Heart right ventricle (tissue), 16 donors: ENCODE measurements at regions of chr17 and their contacts with region 1.

Region 1: DNA sequence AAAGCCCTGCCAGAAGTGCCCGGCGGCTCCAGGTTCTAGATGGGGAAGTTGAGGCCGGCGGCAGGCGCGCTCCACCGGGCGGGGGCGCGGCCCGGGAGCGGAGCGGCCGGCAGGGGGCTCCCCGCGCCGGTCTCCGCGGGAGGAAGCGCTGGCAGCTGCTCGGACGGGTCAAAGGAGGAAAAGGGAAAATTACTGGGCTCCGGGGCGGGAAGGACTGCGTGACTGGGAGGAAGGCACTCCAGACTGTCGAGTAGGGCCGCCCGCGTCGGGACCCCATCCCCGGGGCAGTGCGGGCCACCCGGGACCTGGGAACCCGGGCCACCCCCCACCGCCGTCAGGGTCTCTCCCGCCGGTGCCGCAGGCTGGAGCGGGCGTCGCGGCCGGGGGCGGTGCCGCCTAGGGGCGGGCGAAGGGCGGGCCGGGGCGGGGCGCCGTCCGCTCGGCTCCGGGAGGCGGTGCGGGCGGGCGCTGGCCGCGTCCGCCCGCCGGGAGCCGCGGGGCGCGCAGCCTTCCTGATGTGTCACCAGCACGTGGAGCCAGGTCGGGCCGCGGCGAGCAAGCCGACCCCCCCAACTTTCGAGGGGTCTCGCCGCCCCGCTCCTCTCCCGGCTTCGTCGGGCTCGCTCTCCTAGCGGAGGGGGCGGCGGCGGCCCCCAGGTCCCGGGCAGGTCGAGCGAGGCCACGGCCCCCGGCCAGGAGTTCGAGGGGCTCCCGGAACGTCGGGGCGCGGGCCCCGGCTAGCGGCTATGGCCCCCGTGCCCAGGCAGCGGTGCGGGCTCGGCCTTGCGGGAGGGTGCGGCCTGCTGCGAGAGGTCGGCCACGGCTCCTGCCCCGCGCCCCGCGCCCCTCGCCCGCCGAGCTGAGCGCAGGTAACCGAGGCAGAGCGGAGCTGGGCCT is 167.5 kb downstream of the RAB11FIP4 start:
- DNase-seq: peak; percentile 80 to 84
- ATAC-seq: peak; percentile 85 to 94 (median 90)
- H3K4me3 ChIP-seq: peak overlapping the region; percentile 58 to 89 (median 72)
- H3K27ac ChIP-seq: peak overlapping the region; percentile 57 to 97 (median 94)
- H3K4me1 ChIP-seq: peaks cover 11 to 47% (median 29%) of the 10 kb centered on the region in 9 donors
- H3K27me3 ChIP-seq: no peaks in the 10 kb centered on the region
- CTCF ChIP-seq: peak; percentile 80 to 99 (median 91)

Region 2: GRCh38 chr17:31425282-31426040 is 133.5 kb before region 1 on chr17:
- intact Hi-C with region 1: no loop called
- DNase-seq: peak; percentile 34 to 42
- ATAC-seq: peak; percentile 41 to 75 (median 50)
- H3K4me3 ChIP-seq: no peak overlapping the region
- H3K27ac ChIP-seq: peak overlapping the region in 6 of 10 donors; percentile 9 to 36 (median 21)
- H3K4me1 ChIP-seq: peaks cover 2 to 18% (median 10%) of the 10 kb centered on the region in 9 donors
- H3K27me3 ChIP-seq: peaks cover 0 to 26% (median 9%) of the 10 kb centered on the region in 7 donors
- CTCF ChIP-seq: no peak

Region 3: DNA sequence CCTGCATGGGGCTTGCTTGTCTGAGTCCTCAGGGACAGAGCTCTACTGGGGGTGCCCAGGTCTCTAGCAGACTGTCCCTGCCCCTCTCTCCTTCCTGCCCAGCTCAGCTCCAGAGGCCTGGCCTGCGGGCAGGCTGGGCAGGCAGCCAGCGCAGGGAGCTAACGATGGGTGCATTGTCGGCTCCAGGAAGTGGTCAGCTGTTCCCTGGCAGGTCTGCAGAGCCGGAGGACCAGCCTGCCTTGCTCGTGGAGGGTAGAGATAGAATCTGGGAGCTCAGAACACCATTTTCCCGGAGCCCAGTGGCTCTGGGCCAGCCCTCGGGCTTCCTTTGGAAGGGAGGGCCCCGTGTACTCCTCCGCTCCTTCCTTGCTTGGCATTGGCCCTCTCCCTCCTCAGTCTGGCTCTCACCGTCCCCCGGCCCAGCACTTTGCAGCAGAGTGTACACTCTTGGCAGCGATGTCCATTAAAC is 22.1 kb after region 1 on chr17:
- intact Hi-C with region 1: loop called in 1 of 10 experiments (anchors 2 kb)
- DNase-seq: peak; percentile 79 to 83
- ATAC-seq: peak; percentile 80 to 94 (median 88)
- H3K4me3 ChIP-seq: peak overlapping the region in 7 of 10 donors; percentile 22 to 41 (median 32)
- H3K27ac ChIP-seq: peak overlapping the region; percentile 53 to 95 (median 85)
- H3K4me1 ChIP-seq: peaks cover 6 to 54% (median 36%) of the 10 kb centered on the region in 9 donors
- H3K27me3 ChIP-seq: no peaks in the 10 kb centered on the region
- CTCF ChIP-seq: no peak

Region 4: GRCh38 chr17:31690151-31690551 is 131.2 kb after region 1 on chr17:
- intact Hi-C with region 1: loop called in 5 of 10 experiments (anchors 5 to 10 kb)
- DNase-seq: no peak
- ATAC-seq: no peak
- H3K4me3 ChIP-seq: no peak overlapping the region
- H3K27ac ChIP-seq: no peak overlapping the region
- H3K4me1 ChIP-seq: peaks cover 0 to 34% (median 28%) of the 10 kb centered on the region in 9 donors
- H3K27me3 ChIP-seq: no peaks in the 10 kb centered on the region
- CTCF ChIP-seq: no peak

Region 5: GRCh38 chr17:31722251-31723056 is 163.5 kb after region 1 on chr17:
- intact Hi-C with region 1: loop called in 2 of 10 experiments (anchors 10 kb)
- DNase-seq: peak; percentile 21 to 64
- ATAC-seq: peak; percentile 88 to 98 (median 95)
- H3K4me3 ChIP-seq: no peak overlapping the region
- H3K27ac ChIP-seq: peak overlapping the region in 9 of 10 donors; percentile 47 to 88 (median 82)
- H3K4me1 ChIP-seq: peaks cover 13 to 36% (median 27%) of the 10 kb centered on the region in 9 donors
- H3K27me3 ChIP-seq: no peaks in the 10 kb centered on the region
- CTCF ChIP-seq: no peak

Region 6: GRCh38 chr17:31740611-31741082 is 181.7 kb after region 1 on chr17:
- intact Hi-C with region 1: loop called in 1 of 10 experiments (anchors 2 kb)
- DNase-seq: no peak
- ATAC-seq: no peak
- H3K4me3 ChIP-seq: no peak overlapping the region
- H3K27ac ChIP-seq: peak overlapping the region in 8 of 10 donors; percentile 1 to 79 (median 60)
- H3K4me1 ChIP-seq: peaks cover 7 to 65% (median 48%) of the 10 kb centered on the region in 9 donors
- H3K27me3 ChIP-seq: no peaks in the 10 kb centered on the region
- CTCF ChIP-seq: no peak

Region 7: DNA sequence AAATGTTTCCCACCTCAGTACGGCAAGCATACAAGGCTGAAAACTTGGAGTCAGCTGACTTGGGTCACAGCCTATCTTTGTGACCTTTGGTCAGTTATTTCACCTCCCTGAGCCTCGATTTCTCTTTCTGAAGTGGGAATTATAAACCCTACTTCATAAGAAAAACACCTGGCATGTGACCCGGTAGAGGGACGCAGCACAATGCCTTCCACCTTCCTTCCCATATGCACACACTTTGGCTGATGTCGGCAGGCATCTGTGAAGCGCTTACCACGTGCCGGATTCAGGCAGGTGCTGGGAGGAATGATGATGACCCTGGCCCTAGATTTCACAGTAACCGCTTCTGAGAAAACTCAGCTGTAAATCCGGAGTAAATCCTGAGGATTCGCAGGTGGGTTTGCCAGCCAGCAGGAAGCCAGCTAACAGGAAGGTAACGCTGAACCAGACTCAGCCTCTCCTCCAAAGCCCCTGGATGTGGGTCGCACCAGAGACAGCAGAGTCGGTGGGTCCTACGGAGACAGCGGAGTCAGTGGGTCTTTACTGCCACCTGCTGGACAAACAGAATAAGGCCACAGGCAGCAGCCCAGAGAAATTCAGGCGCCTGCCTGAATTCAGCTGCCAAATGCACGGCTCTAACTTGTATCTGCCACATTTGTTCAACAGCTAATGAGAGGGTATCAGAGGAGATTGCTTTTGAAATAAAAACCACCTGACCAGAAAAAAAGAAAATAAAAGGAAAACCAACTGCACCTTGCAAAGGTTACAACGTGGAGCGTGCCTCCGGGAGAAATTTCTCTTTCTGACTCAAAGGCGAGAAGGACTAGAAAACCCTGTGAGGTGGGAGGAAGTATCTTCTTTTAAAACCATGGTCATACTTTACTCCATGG is 283.4 kb after region 1 on chr17:
- intact Hi-C with region 1: loop called (anchors 1 to 2 kb)
- DNase-seq: peak; percentile 56 to 70
- ATAC-seq: peak; percentile 84 to 96 (median 92)
- H3K4me3 ChIP-seq: peak overlapping the region in 8 of 10 donors; percentile 9 to 38 (median 31)
- H3K27ac ChIP-seq: peak overlapping the region in 9 of 10 donors; percentile 8 to 57 (median 31)
- H3K4me1 ChIP-seq: peaks cover 8 to 30% (median 18%) of the 10 kb centered on the region in 9 donors
- H3K27me3 ChIP-seq: no peaks in the 10 kb centered on the region
- CTCF ChIP-seq: peak; percentile 92 to 99 (median 97)

Region 8: DNA sequence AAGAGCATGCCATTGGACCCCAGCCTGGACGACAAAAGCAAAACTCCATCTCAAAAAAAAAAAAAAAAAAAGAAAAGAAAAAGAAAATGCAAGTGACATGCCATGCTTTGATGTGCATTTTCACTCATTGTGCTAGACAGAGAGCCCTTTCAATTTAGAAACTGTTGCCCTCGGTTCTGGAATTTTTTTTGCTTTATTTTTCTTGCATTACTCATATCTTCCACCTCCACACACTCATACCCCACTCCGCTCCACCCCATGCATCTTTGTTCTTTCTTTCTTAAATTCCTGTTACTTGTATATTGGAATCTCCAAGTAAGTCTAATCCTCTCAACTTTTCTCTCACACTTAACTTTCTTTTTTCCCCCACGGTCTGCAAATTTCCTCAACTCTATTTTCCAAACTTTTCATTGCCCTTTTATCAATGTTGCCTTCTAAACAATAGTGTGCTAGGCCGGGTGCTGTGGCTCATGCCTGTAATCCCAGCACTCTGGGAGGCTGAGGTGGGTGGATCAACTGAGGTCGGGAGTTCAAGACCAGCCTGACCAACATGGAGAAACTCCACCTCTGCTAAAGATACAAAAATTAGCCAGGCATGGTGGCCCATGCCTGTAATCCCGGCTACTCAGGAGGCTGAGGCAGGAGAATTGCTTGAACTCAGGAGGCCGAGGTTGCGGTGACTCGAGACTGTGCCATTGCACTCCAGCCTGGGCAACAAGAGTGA is 361.0 kb after region 1 on chr17:
- intact Hi-C with region 1: no loop called
- DNase-seq: no peak
- ATAC-seq: no peak
- H3K4me3 ChIP-seq: no peak overlapping the region
- H3K27ac ChIP-seq: no peak overlapping the region
- H3K4me1 ChIP-seq: peaks cover 0 to 6% (median 0%) of the 10 kb centered on the region in 9 donors
- H3K27me3 ChIP-seq: peaks cover 0 to 73% (median 40%) of the 10 kb centered on the region in 7 donors
- CTCF ChIP-seq: no peak